ENCODE measurements at regions of chr3 and their contacts with region 1.

Region 1: DNA sequence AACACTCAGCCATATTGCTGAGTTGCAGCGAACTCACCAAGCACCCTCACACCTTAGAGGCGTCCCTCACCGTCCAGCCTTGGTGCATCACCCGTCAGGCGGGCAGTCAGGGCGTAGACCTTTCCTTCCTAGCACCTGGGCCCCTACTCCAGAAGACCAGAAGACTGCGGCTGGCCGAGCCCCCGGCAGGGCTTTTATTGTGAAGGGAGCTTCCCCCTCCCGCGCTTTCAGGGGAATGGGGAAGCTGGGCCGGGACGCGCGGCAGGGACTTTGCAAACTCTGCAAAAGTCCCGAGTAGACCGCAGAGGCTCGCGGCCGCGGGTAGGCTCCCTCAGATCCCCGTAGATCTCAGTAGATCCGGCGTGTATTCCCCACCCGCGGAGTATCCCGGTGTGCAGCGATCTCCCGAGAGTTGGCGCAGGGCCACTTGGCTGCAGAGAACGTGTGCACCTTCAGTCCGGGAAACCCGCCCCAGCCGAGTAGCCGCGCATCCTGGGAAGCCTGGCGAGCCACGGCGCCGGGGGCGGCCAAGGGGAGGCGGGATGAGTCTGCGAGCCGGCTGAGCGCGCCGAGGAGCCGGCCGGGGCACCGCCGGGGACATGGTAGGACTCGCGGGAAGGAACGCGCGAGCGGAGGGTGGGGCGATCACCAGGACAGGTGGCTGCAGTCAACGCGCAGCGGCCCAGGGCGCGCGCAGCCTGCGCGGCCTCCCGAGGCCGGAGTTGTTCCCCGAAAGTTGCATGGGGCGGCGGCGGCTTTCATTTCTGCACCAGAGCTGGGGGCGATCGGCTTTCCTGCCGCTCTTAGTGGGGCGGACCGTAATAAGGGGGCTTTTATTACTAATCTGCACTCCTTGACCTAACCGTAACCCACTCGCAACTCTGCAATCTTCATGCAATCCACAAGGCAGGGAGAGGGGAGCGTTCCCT is at the start of gene GASK1A:
- DNase-seq: peak; percentile 20
- H3K4me3 ChIP-seq: peak within 1 kb of the TSS; percentile 55 to 56
- H3K27ac ChIP-seq: peak within 1 kb of the TSS; percentile 53 to 59
- H3K4me1 ChIP-seq: no peaks in the 10 kb centered on the region
- H3K27me3 ChIP-seq: peaks cover 3% of the 10 kb centered on the region
- CTCF ChIP-seq: no peak
- POLR2A ChIP-seq: no peak
- total RNA-seq, gene GASK1A: 4.7 to 17.5 TPM

Region 2: GRCh38 chr3:42652611-42653302 is 326.6 kb before region 1 on chr3:
- intact Hi-C with region 1: no loop called
- DNase-seq: no peak
- H3K4me3 ChIP-seq: peak overlapping the region in 1 of 2 donors; percentile 64
- H3K27ac ChIP-seq: peak overlapping the region; percentile 85 to 90
- H3K4me1 ChIP-seq: no peaks in the 10 kb centered on the region
- H3K27me3 ChIP-seq: no peaks in the 10 kb centered on the region
- CTCF ChIP-seq: no peak
- POLR2A ChIP-seq: peak; percentile 86

Region 3: GRCh38 chr3:43094851-43095250 is 115.5 kb after region 1 on chr3:
- intact Hi-C with region 1: loop called (anchors 5 kb)
- DNase-seq: no peak
- H3K4me3 ChIP-seq: no peak overlapping the region
- H3K27ac ChIP-seq: no peak overlapping the region
- H3K4me1 ChIP-seq: no peaks in the 10 kb centered on the region
- H3K27me3 ChIP-seq: no peaks in the 10 kb centered on the region
- CTCF ChIP-seq: no peak
- POLR2A ChIP-seq: no peak

Region 4: DNA sequence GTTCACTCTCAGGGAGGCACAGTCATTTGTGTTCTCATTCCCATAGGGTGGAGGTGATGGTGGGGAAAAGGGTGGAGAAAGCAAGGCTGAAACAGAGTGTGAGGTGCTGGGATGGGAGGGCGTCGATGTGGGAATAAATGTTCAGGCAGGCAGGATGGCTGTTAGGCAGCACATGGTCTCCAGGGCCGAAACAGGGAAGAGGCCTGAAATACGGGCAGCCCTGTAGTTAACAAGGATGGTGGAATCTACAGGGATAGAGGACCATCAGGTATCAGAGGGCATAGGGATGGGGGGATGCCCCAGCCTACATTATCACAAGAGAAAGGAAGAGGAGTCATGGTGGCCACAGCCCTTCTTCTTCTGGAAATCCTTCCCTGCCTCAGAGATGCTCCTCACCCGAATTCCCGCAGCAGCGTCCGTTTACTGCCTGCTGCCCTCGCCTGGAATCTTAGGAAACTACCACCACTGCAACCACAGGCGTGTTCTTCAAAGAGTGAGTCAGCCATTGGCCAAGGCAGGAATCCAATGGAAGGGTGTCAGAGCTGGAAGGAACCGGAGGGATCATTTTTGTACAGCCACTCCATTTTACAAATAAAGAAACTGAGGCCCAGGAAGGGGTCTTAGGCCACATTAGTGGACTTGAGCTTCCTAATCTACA is 176.3 kb after region 1 on chr3:
- intact Hi-C with region 1: loop called (anchors 5 kb)
- DNase-seq: peak; percentile 22
- H3K4me3 ChIP-seq: no peak overlapping the region
- H3K27ac ChIP-seq: no peak overlapping the region
- H3K4me1 ChIP-seq: peaks cover 4% of the 10 kb centered on the region
- H3K27me3 ChIP-seq: no peaks in the 10 kb centered on the region
- CTCF ChIP-seq: peak in 3 of 4 experiments; percentile 18 to 46 (median 45)
- POLR2A ChIP-seq: no peak